ENCODE measurements at regions of chr17 and their contacts with region 1.

Region 1: DNA sequence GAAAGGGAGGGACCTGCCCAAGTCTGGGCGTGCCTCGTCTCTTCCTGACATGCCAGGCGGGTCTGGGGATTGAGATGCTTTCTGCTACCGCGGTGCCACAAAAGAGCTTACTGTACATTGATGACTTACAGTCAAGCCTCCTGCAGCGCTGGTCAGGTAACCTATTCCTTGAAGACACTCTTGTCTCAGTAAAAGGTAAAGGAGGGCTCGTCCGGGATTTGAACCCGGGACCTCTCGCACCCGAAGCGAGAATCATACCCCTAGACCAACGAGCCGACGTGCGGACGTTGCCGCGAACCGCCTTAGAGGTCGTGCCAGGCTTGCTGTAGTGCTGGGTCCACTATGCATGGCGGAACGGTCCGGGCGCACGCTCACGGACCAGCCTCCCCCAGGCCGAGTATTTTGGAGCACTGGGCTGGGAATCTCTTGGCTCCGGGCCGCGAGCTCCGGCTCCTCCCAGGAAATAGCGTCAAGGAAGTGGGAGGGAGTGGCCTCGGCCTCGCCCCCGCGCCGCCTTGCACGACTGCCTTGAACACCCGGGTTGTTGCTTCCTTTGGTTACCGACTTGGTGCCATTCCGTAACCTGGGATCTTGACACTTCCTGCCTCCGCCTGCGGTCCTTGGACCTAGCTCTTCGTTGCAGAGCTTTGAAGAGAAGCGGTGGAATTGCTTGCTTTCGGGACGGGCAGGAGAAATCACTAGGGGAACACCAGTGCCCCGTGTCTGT is 12.4 kb upstream of the AURKB start:
- DNase-seq: peak; percentile 88
- ATAC-seq: peak; percentile 64
- H3K4me3 ChIP-seq: peak overlapping the region; percentile 69 to 85 (median 70)
- H3K27ac ChIP-seq: peak overlapping the region; percentile 91
- H3K4me1 ChIP-seq: peaks cover 33% of the 10 kb centered on the region
- H3K27me3 ChIP-seq: no peaks in the 10 kb centered on the region; a peak in 1 of 5 replicates
- CTCF ChIP-seq: no peak
- EP300 ChIP-seq: no peak
- POLR2A ChIP-seq: peak; percentile 53 to 78; a peak in 3 of 4 replicates
- RAD21 ChIP-seq: peak; percentile 31

Region 2: DNA sequence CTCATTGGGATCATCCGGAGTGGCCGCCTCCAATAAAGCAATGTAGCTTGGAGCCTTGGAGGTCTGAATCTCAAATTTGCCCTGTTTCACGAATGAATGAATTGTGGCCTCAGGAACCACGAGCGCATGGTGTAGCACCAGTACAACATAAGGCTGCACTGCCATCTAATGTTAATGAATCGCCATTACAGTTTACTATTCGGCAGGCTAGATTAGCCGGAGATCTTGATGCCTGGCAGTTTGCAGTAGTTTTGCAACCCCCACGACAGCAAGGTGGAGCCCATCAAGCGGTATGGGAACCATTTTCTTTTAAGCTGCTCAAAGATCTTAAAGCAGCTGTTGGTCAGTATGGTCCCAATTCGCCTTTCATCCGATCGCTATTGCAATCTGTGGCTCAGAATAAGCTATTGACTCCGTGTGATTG is 165.1 kb before region 1 on chr17:
- CTCF ChIA-PET with region 1: no interaction called
- POLR2A ChIA-PET with region 1: no interaction called
- in situ Hi-C with region 1: no loop called
- intact Hi-C with region 1: no loop called
- DNase-seq: peak; percentile 75
- ATAC-seq: peak; percentile 46
- H3K4me3 ChIP-seq: peak overlapping the region; percentile 38 to 64 (median 51); a peak in 5 of 6 replicates
- H3K27ac ChIP-seq: peak overlapping the region; percentile 92
- H3K4me1 ChIP-seq: peaks cover 56% of the 10 kb centered on the region
- H3K27me3 ChIP-seq: peaks cover 3 to 32% of the 10 kb centered on the region in 2 experiments; a peak in 4 of 5 replicates
- CTCF ChIP-seq: peak; percentile 82
- EP300 ChIP-seq: no peak
- POLR2A ChIP-seq: peak in 1 of 2 experiments; percentile 52; a peak in 2 of 4 replicates
- RAD21 ChIP-seq: peak; percentile 61; the same call in 1 of the 2 replicates

Region 3: DNA sequence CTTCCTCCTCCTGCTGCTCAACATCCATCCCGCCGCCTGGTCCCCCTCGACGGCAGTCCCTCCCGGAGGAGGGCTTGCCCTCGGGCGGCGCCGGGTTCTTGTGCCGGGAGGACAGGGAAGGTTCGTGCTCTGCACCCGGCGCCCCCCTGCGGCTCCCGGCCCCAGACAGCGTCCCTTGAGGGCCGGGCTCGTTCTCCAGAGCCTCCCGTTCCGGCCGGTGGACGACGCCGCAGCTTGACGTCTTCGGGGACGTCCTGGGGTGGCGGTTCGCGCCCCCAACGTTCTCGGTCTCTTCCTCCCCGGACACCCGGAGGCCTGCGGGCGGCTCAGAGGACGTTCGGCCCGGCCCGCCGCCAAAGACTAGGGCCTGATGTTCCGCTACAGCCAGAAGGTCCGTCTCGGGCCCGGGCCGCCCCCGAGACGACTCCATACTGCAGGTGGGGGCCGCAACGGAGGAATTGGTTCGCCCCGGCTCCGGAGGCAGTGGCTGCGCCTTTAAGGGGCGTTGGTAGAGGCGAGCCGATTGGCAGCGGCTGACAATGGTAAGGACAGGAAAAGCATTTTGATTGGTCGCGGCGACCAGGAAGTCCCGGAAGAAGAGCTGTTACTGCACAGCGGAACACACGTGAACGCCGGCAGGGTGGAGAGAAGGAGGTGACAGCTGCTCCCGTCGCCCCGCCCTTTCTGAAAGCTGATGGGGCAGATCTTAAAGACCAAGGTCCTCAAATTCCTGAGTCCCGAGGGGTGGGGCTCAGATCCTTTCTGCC is 32.9 kb before region 1 on chr17 and contains the start of gene BORCS6:
- CTCF ChIA-PET with region 1: no interaction called
- POLR2A ChIA-PET with region 1: interaction called, 111 read pairs
- in situ Hi-C with region 1: loop called (anchors 5 kb)
- intact Hi-C with region 1: loop called (anchors 1 kb)
- DNase-seq: peak; percentile 95
- ATAC-seq: peak; percentile 67
- H3K4me3 ChIP-seq: peak within 1 kb of the TSS; percentile 74 to 92 (median 77)
- H3K27ac ChIP-seq: peak within 1 kb of the TSS; percentile 64
- H3K4me1 ChIP-seq: peaks cover 47% of the 10 kb centered on the region
- H3K27me3 ChIP-seq: no peaks in the 10 kb centered on the region; a peak in 1 of 5 replicates
- CTCF ChIP-seq: peak; percentile 47
- EP300 ChIP-seq: peak in 1 of 2 experiments; percentile 6; a peak in 1 of 4 replicates
- POLR2A ChIP-seq: peak; percentile 30 to 46; a peak in 2 of 4 replicates
- RAD21 ChIP-seq: peak; percentile 18; the same call in 1 of the 2 replicates
- total RNA-seq, gene BORCS6: 5.1 and 5.3 TPM in 2 replicates

Region 4: GRCh38 chr17:8248751-8249607 is 26.2 kb after region 1 on chr17 and contains the start of gene PFAS:
- CTCF ChIA-PET with region 1: no interaction called
- POLR2A ChIA-PET with region 1: interaction called, 89 read pairs
- in situ Hi-C with region 1: no loop called
- intact Hi-C with region 1: loop called (anchors 1 kb)
- DNase-seq: peak; percentile 87
- ATAC-seq: peak; percentile 59
- H3K4me3 ChIP-seq: peak within 1 kb of the TSS; percentile 74 to 100 (median 96)
- H3K27ac ChIP-seq: peak within 1 kb of the TSS; percentile 98
- H3K4me1 ChIP-seq: peaks cover 32% of the 10 kb centered on the region
- H3K27me3 ChIP-seq: no peaks in the 10 kb centered on the region; a peak in 1 of 5 replicates
- CTCF ChIP-seq: no peak
- EP300 ChIP-seq: peak in 1 of 2 experiments; percentile 58; a peak in 2 of 4 replicates
- POLR2A ChIP-seq: peak; percentile 88 to 89
- RAD21 ChIP-seq: no peak
- total RNA-seq, gene PFAS: 42.8 and 58.2 TPM in 2 replicates

Region 5: GRCh38 chr17:8300627-8301242 is 77.9 kb after region 1 on chr17:
- CTCF ChIA-PET with region 1: interaction called, 3 read pairs
- POLR2A ChIA-PET with region 1: interaction called, 25 read pairs
- in situ Hi-C with region 1: loop called (anchors 5 kb)
- intact Hi-C with region 1: loop called (anchors 1 kb)
- DNase-seq: peak; percentile 65
- ATAC-seq: peak; percentile 89
- H3K4me3 ChIP-seq: no peak overlapping the region
- H3K27ac ChIP-seq: no peak overlapping the region
- H3K4me1 ChIP-seq: peaks cover 42% of the 10 kb centered on the region; the same call in 1 of the 2 replicates
- H3K27me3 ChIP-seq: no peaks in the 10 kb centered on the region
- CTCF ChIP-seq: peak; percentile 93
- EP300 ChIP-seq: no peak
- POLR2A ChIP-seq: no peak
- RAD21 ChIP-seq: peak; percentile 84